ENCODE measurements at regions of chr1 and their contacts with region 1.

Region 1: GRCh38 chr1:211133836-211134669 is at the start of gene KCNH1:
- DNase-seq: peak; percentile 86 to 94 (median 91)
- H3K4me3 ChIP-seq: peak within 1 kb of the TSS; percentile 57 to 86 (median 72)
- H3K27ac ChIP-seq: peak within 1 kb of the TSS; percentile 66 to 96 (median 89)
- H3K27me3 ChIP-seq: peaks cover 0 to 3% (median 0%) of the 10 kb centered on the region in 45 donors
- CTCF ChIP-seq: peak; percentile 81 to 100 (median 99)
- total RNA-seq, gene KCNH1: 30.0 to 110 (median 71.5) TPM

Region 2: GRCh38 chr1:209421186-209421585 is 1712.9 kb before region 1 on chr1:
- intact Hi-C with region 1: no loop called
- DNase-seq: peak in 1 of 10 donors; percentile 36
- H3K4me3 ChIP-seq: no peak overlapping the region
- H3K27ac ChIP-seq: peak overlapping the region in 1 of 59 donors; percentile 57
- H3K27me3 ChIP-seq: peaks cover 0 to 2% (median 0%) of the 10 kb centered on the region in 45 donors
- CTCF ChIP-seq: no peak

Region 3: GRCh38 chr1:210360852-210361477 is 773.1 kb before region 1 on chr1:
- intact Hi-C with region 1: loop called in 1 of 2 experiments (anchors 5 kb)
- DNase-seq: peak in 1 of 10 donors; percentile 43
- H3K4me3 ChIP-seq: peak overlapping the region in 2 of 59 donors; percentile 8 to 33
- H3K27ac ChIP-seq: peak overlapping the region in 3 of 59 donors; percentile 10 to 27 (median 12)
- H3K27me3 ChIP-seq: no peaks in the 10 kb centered on the region
- CTCF ChIP-seq: peak; percentile 59 to 93 (median 79)

Region 4: GRCh38 chr1:210448297-210448892 is 685.7 kb before region 1 on chr1:
- intact Hi-C with region 1: loop called (anchors 1 to 2 kb)
- DNase-seq: peak in 2 of 10 donors; percentile 34 to 53
- H3K4me3 ChIP-seq: no peak overlapping the region
- H3K27ac ChIP-seq: no peak overlapping the region
- H3K27me3 ChIP-seq: no peaks in the 10 kb centered on the region
- CTCF ChIP-seq: peak; percentile 43 to 89 (median 71)

Region 5: DNA sequence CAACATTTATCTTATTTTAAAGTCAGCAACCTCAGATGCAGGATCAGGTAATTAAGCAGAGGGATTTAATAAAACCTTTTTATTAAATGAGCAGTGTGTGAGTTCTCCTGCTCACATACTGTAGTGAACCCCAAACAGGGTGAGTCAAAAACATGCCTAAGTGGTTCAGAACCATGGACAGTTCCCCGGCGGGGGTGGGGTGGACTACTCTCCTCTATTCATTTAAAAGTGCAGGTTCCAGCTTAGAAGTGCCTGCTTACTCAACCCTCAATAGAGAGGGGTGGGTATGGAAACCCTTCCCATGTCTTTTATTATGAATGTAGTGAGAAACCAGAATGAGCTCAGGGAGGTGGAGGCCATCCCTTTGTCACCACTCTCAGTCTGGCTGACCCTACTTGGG is 407.4 kb before region 1 on chr1:
- intact Hi-C with region 1: loop called in 1 of 2 experiments (anchors 10 kb)
- DNase-seq: peak in 1 of 10 donors; percentile 58
- H3K4me3 ChIP-seq: no peak overlapping the region
- H3K27ac ChIP-seq: peak overlapping the region in 14 of 59 donors; percentile 0 to 67 (median 22)
- H3K27me3 ChIP-seq: no peaks in the 10 kb centered on the region
- CTCF ChIP-seq: no peak

Region 6: GRCh38 chr1:210850556-210850955 is 283.5 kb before region 1 on chr1:
- intact Hi-C with region 1: loop called (anchors 2 to 10 kb)
- DNase-seq: peak; percentile 37 to 89 (median 80)
- H3K4me3 ChIP-seq: peak overlapping the region in 4 of 59 donors; percentile 2 to 33 (median 15)
- H3K27ac ChIP-seq: peak overlapping the region; percentile 76 to 99 (median 93)
- H3K27me3 ChIP-seq: no peaks in the 10 kb centered on the region
- CTCF ChIP-seq: peak in 26 of 56 donors; percentile 7 to 43 (median 26)

Measured in dorsolateral prefrontal cortex (tissue), 120 donors.